ENCODE measurements at regions of chr22 and their contacts with region 1.

Region 1: DNA sequence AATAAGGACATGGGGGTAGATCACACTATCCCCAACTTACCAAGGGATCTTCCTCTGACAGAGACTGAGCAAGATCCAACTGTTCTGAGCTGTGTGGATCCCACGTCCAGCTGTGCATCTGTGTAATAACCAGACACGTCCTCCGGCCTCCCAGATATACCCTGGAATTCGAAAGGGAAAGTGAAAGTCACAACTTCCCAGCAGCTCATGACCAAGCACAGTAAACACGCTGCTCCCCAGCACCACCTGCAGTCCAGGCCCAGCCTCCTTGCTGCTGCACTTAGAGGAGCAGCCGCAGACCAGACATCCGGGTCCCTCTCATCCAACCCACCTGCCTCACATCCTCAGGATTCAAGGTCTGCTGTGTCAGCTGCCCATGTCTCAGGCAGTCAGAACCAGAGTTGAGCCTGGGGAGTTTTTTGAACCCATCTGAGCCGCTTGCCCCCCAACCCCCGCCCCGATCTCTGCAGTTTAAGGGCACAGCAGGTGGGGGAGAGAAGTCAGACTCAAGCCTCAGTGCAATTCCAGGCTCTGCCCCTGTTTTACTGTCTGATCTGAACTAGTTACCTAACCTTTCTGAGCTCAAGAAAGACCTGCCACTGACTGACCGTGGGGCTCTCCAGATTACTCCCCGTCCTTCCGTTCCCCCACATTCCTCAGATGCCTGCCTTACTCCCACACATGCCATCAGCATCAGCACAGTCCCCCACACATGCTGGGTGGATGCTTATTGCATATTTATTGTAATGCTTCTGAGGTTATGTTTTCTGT is at the start of gene APOL2:
- DNase-seq: peak; percentile 96
- H3K4me3 Mint-ChIP-seq: peak within 1 kb of the TSS; percentile 91
- H3K27ac Mint-ChIP-seq: peak within 1 kb of the TSS; percentile 94
- H3K4me1 Mint-ChIP-seq: peaks cover 40% of the 10 kb centered on the region
- H3K27me3 Mint-ChIP-seq: peaks cover 2% of the 10 kb centered on the region
- total RNA-seq, gene APOL2: 52.0 and 58.6 TPM in 2 replicates

Region 2: DNA sequence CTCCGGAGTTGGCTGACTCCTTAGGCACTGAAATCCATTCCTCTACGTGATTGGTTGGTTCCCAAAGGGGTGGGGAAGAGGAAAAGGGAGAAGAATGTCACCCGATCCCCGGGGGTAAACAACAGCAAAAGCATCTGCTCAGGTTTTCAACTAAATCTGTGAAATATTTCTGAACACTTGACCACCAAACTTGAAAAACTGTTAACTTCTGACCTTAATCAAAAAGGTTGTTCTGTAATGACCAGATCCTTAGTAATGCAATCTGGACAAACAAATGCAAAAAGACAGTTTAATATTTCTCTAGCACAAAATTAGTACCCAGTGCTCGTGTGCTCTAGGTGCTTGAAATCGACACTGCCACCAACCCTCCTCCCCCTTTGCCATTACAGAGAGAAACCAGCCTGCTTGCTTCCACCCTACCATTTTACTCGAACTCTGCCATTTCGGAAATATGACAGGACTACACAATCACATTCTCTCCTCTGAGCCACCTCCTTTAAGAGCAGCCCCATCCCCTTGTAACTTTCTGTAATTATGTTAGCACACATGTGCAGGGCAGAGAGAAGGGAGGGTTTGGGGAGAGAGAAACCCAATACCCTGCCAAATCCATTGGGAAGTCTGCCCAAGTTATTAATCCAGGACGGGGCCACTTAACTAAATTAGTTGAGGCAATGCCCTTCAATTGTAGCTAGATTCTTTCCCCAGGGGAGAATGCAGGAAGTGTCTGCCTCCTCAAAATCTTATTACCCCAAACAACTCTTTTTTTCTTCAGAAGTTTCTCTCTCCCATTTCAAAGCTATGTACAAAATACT is 324.7 kb before region 1 on chr22:
- intact Hi-C with region 1: no loop called
- DNase-seq: no peak
- H3K4me3 Mint-ChIP-seq: peak overlapping the region; percentile 28
- H3K27ac Mint-ChIP-seq: no peak overlapping the region
- H3K4me1 Mint-ChIP-seq: peaks cover 16% of the 10 kb centered on the region
- H3K27me3 Mint-ChIP-seq: no peaks in the 10 kb centered on the region

Region 3: GRCh38 chr22:36156515-36157419 is 82.8 kb before region 1 on chr22:
- intact Hi-C with region 1: loop called (anchors 5 kb)
- DNase-seq: peak; percentile 86
- H3K4me3 Mint-ChIP-seq: peak overlapping the region; percentile 94
- H3K27ac Mint-ChIP-seq: peak overlapping the region; percentile 99
- H3K4me1 Mint-ChIP-seq: peaks cover 81% of the 10 kb centered on the region
- H3K27me3 Mint-ChIP-seq: no peaks in the 10 kb centered on the region

Region 4: GRCh38 chr22:36252754-36253517 is 13.3 kb after region 1 on chr22 and contains the start of gene APOL1:
- intact Hi-C with region 1: loop called (anchors 1 kb)
- DNase-seq: peak; percentile 90
- H3K4me3 Mint-ChIP-seq: peak within 1 kb of the TSS; percentile 92
- H3K27ac Mint-ChIP-seq: peak within 1 kb of the TSS; percentile 90
- H3K4me1 Mint-ChIP-seq: peaks cover 55% of the 10 kb centered on the region
- H3K27me3 Mint-ChIP-seq: no peaks in the 10 kb centered on the region
- total RNA-seq, gene APOL1: 36.2 and 37.3 TPM in 2 replicates

Region 5: GRCh38 chr22:36277482-36278291 is 38.1 kb after region 1 on chr22:
- intact Hi-C with region 1: loop called (anchors 5 kb)
- DNase-seq: peak; percentile 87
- H3K4me3 Mint-ChIP-seq: no peak overlapping the region
- H3K27ac Mint-ChIP-seq: peak overlapping the region; percentile 9
- H3K4me1 Mint-ChIP-seq: peaks cover 10% of the 10 kb centered on the region
- H3K27me3 Mint-ChIP-seq: no peaks in the 10 kb centered on the region

Measured in activated CD4-positive, alpha-beta T cell treated with anti-CD3 and anti-CD28 coated beads, Interleukin-2, amount 10 ng/mL, durations not matched to agents 24 days and 14 days (primary cell).